B cell (primary cell): ENCODE measurements at regions of chr3 and their contacts with region 1.

Region 1: DNA sequence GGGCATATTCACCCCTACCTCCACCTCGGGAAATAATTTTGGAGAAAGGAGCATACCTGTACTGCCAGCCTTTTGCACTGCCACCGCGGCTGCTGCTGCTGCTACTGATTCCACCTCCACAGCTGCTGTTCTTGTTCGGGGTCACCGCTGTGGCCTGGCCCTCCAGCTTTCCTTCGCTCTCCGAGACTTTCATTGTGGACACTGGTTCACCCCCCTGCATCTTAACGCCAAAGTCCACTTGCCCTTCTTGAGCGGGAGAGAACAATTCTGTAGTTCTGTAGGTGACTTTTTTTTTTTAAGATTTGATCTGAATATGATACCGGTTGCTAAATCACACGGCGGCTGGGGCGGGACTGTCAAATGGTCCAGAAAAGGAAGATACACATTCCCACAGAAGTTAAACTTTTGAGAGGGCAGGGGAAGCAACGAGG is 701 bp downstream of the OSBPL11 start:
- DNase-seq: no peak
- ATAC-seq: no peak
- H3K4me3 ChIP-seq: peak overlapping the region; percentile 74 to 96 (median 88)
- H3K4me3 Mint-ChIP-seq: peak overlapping the region; percentile 97
- H3K27ac ChIP-seq: peak overlapping the region; percentile 71 to 84
- H3K27ac Mint-ChIP-seq: peak overlapping the region; percentile 96
- H3K4me1 ChIP-seq: peaks cover 35 to 42% of the 10 kb centered on the region in 2 donors
- H3K4me1 Mint-ChIP-seq: peaks cover 42% of the 10 kb centered on the region
- H3K27me3 ChIP-seq: no peaks in the 10 kb centered on the region
- H3K27me3 Mint-ChIP-seq: no peaks in the 10 kb centered on the region
- CTCF ChIP-seq: no peak

Region 2: GRCh38 chr3:125055913-125056745 is 538.5 kb before region 1 on chr3 and contains the start of gene HEG1:
- CTCF ChIA-PET with region 1: no interaction called
- POLR2A ChIA-PET with region 1: no interaction called
- intact Hi-C with region 1: loop called (anchors 10 kb)
- DNase-seq: peak; percentile 80
- ATAC-seq: peak; percentile 79
- H3K4me3 ChIP-seq: peak within 1 kb of the TSS; percentile 47 to 83 (median 69)
- H3K4me3 Mint-ChIP-seq: peak within 1 kb of the TSS; percentile 96
- H3K27ac ChIP-seq: peak within 1 kb of the TSS; percentile 44 to 62
- H3K27ac Mint-ChIP-seq: peak within 1 kb of the TSS; percentile 83
- H3K4me1 ChIP-seq: peaks cover 31 to 45% of the 10 kb centered on the region in 2 donors
- H3K4me1 Mint-ChIP-seq: peaks cover 40% of the 10 kb centered on the region
- H3K27me3 ChIP-seq: peaks cover 0 to 6% (median 2%) of the 10 kb centered on the region in 4 experiments
- H3K27me3 Mint-ChIP-seq: peaks cover 13% of the 10 kb centered on the region
- CTCF ChIP-seq: no peak
- total RNA-seq, gene HEG1: 8.9 and 9.2 TPM in 2 replicates

Region 3: GRCh38 chr3:125519678-125520589 is 74.7 kb before region 1 on chr3 and contains the start of gene SNX4:
- CTCF ChIA-PET with region 1: interaction called, 3 read pairs
- POLR2A ChIA-PET with region 1: interaction called, 5 read pairs
- intact Hi-C with region 1: loop called (anchors 2 kb)
- DNase-seq: peak; percentile 91
- ATAC-seq: peak; percentile 95
- H3K4me3 ChIP-seq: peak within 1 kb of the TSS; percentile 53 to 88 (median 77)
- H3K4me3 Mint-ChIP-seq: peak within 1 kb of the TSS; percentile 97
- H3K27ac ChIP-seq: peak within 1 kb of the TSS; percentile 43 to 78
- H3K27ac Mint-ChIP-seq: peak within 1 kb of the TSS; percentile 95
- H3K4me1 ChIP-seq: peaks cover 13 to 27% of the 10 kb centered on the region in 2 donors
- H3K4me1 Mint-ChIP-seq: peaks cover 34% of the 10 kb centered on the region
- H3K27me3 ChIP-seq: no peaks in the 10 kb centered on the region
- H3K27me3 Mint-ChIP-seq: no peaks in the 10 kb centered on the region
- CTCF ChIP-seq: no peak
- total RNA-seq, gene SNX4: 26.1 and 27.0 TPM in 2 replicates

Region 4: GRCh38 chr3:125622381-125622788 is 27.8 kb after region 1 on chr3:
- CTCF ChIA-PET with region 1: no interaction called
- POLR2A ChIA-PET with region 1: no interaction called
- intact Hi-C with region 1: no loop called
- DNase-seq: no peak
- ATAC-seq: no peak
- H3K4me3 ChIP-seq: no peak overlapping the region
- H3K4me3 Mint-ChIP-seq: no peak overlapping the region
- H3K27ac ChIP-seq: no peak overlapping the region
- H3K27ac Mint-ChIP-seq: no peak overlapping the region
- H3K4me1 ChIP-seq: no peaks in the 10 kb centered on the region
- H3K4me1 Mint-ChIP-seq: no peaks in the 10 kb centered on the region
- H3K27me3 ChIP-seq: peaks cover 0 to 4% (median 0%) of the 10 kb centered on the region in 4 experiments
- H3K27me3 Mint-ChIP-seq: peaks cover 16% of the 10 kb centered on the region
- CTCF ChIP-seq: no peak

Region 5: DNA sequence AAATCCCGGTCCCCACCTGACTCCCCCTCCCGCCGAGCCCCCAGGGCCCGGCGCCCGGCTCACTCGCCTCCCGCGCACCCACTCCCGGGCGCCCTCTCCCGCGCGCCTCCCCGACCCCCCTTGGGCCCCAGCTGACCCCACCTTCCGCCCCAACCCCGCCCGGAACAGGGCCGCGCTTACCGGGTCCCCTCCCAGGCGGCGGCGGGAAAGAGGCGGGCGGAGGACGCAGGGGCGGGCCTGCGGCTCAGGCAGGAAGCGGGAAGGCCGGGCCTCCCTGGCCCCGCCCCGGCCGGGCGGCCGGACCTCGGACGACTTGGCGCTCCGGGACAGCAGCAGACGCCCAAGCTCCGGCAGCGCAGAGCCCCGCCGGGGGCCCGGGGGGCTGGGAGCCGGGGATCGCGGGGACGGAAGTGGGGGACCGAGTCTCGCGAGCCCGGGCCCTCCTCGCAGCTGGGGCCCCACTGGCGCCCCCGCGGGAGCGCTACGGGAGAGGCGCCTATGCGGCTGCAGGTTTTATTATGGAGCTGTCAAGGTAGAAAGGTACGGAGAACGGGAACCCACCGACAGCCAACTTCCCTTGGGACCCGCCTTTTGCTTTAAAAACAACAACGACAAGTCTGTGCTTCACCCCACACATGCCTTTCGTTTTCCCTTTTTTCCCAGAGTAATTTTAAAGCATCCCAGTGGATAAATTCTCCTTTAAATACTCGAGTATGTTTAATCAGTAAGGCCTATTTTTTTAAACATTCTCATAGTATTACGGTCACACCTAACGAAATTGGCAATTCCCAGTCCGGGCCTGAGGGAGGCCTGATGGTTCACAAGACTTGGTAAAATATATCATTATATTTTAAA is 489.5 kb after region 1 on chr3 and contains the start of gene SLC41A3:
- CTCF ChIA-PET with region 1: no interaction called
- POLR2A ChIA-PET with region 1: no interaction called
- intact Hi-C with region 1: loop called (anchors 5 kb)
- DNase-seq: peak; percentile 85
- ATAC-seq: peak; percentile 92
- H3K4me3 ChIP-seq: peak within 1 kb of the TSS in 4 of 5 experiments; percentile 51 to 79 (median 67)
- H3K4me3 Mint-ChIP-seq: peak within 1 kb of the TSS; percentile 87
- H3K27ac ChIP-seq: peak within 1 kb of the TSS; percentile 56 to 92
- H3K27ac Mint-ChIP-seq: peak within 1 kb of the TSS; percentile 87
- H3K4me1 ChIP-seq: peaks cover 13 to 15% of the 10 kb centered on the region in 2 donors
- H3K4me1 Mint-ChIP-seq: peaks cover 14% of the 10 kb centered on the region
- H3K27me3 ChIP-seq: no peaks in the 10 kb centered on the region
- H3K27me3 Mint-ChIP-seq: no peaks in the 10 kb centered on the region
- CTCF ChIP-seq: peak; percentile 68
- total RNA-seq, gene SLC41A3: 35.9 and 39.3 TPM in 2 replicates

Region 6: GRCh38 chr3:126475413-126476114 is 881.0 kb after region 1 on chr3 and contains the start of gene ZXDC:
- CTCF ChIA-PET with region 1: no interaction called
- POLR2A ChIA-PET with region 1: no interaction called
- intact Hi-C with region 1: loop called (anchors 10 kb)
- DNase-seq: peak; percentile 96
- ATAC-seq: peak; percentile 84
- H3K4me3 ChIP-seq: peak within 1 kb of the TSS; percentile 51 to 84 (median 65)
- H3K4me3 Mint-ChIP-seq: peak within 1 kb of the TSS; percentile 89
- H3K27ac ChIP-seq: peak within 1 kb of the TSS; percentile 61 to 73
- H3K27ac Mint-ChIP-seq: peak within 1 kb of the TSS; percentile 91
- H3K4me1 ChIP-seq: peaks cover 35 to 39% of the 10 kb centered on the region in 2 donors
- H3K4me1 Mint-ChIP-seq: peaks cover 40% of the 10 kb centered on the region
- H3K27me3 ChIP-seq: no peaks in the 10 kb centered on the region
- H3K27me3 Mint-ChIP-seq: no peaks in the 10 kb centered on the region
- CTCF ChIP-seq: peak; percentile 29
- total RNA-seq, gene ZXDC: 70.9 and 75.9 TPM in 2 replicates